Naive thymus-derived CD4-positive, alpha-beta T cell (primary cell): ENCODE measurements at regions of chr14 and their contacts with region 1.

Region 1: DNA sequence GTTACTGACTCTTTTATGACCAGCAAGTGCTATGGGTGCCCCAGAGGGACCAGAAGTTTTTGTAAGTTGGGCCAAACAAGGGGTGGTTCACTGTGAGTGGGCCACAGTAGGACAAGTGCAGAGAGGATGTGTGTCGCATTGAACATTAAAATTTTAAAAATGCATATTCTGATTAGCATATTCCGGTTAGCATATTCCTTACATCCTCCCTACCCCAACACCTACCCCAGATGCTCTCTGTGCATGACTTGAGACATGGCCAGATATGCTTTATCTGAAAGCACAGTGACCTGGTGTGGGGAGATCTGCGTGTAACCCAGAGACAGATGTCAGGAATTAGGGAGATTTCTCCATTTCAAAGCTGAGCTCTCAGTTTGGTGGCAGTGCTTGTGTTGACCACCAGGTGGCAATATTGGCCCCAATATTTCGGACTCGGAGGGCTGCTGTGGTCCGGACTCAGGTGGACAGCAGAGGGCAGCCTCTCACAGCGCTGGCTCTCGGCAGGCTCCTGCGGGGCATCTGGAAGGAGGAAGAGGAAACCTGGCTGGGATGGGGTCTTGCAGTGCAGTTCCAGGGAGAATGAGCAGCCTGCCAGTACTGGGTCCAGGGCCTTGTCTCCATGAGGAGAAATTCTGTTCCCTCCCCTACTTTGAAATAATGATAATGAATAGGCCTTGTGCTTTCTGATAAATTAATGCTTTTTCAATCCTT is 1.6 kb upstream of the CEBPE start:
- DNase-seq: peak; percentile 58 to 77 (median 74)
- ATAC-seq: peak; percentile 92
- H3K4me3 ChIP-seq: peak overlapping the region; percentile 53
- H3K4me3 Mint-ChIP-seq: peak overlapping the region; percentile 63 to 87 (median 72)
- H3K27ac ChIP-seq: peak overlapping the region; percentile 71
- H3K27ac Mint-ChIP-seq: peak overlapping the region; percentile 90 to 99 (median 96)
- H3K4me1 ChIP-seq: peaks cover 21 to 41% of the 10 kb centered on the region in 2 donors
- H3K4me1 Mint-ChIP-seq: peaks cover 26 to 65% (median 48%) of the 10 kb centered on the region in 7 donors
- H3K27me3 ChIP-seq: no peaks in the 10 kb centered on the region
- H3K27me3 Mint-ChIP-seq: peaks cover 0 to 5% (median 0%) of the 10 kb centered on the region in 5 donors

Region 2: DNA sequence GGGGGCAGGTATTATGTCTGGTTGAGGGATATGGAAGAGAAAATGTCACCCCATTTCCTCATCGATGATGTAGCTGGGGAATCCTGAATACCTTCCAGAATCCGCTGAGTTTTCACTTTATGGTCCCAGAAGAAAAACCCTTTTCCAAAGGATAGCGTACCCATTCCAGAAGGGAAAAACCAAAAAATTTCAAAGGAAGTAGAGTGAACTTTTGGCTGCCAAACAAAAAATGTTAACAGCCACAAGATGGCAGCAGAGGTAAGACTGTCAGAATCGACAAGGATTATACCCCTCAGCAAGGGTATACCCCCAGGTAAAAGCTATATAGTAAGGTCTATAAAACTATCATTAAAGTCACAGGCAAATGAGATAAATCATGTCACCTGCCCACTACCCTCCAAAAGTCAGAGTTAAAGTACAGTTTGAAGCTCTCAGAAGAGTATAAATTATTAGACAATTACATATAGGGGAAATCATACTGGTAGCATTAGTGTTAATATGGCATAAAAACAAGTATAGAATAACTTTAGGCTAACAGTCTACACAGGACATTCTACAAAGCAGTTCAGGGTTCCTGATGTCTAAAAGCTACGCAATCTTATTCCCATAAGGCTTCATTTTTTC is 43.8 kb before region 1 on chr14:
- CTCF ChIA-PET with region 1: interaction called, 22 read pairs
- POLR2A ChIA-PET with region 1: interaction called, 16 read pairs
- intact Hi-C with region 1: no loop called
- DNase-seq: peak in 5 of 9 donors; percentile 33 to 55 (median 49)
- ATAC-seq: peak; percentile 63
- H3K4me3 ChIP-seq: no peak overlapping the region
- H3K4me3 Mint-ChIP-seq: no peak overlapping the region
- H3K27ac ChIP-seq: peak overlapping the region; percentile 3
- H3K27ac Mint-ChIP-seq: peak overlapping the region in 2 of 9 donors; percentile 47 to 57
- H3K4me1 ChIP-seq: peaks cover 1 to 2% of the 10 kb centered on the region in 2 donors
- H3K4me1 Mint-ChIP-seq: peaks cover 8 to 28% (median 17%) of the 10 kb centered on the region in 7 donors
- H3K27me3 ChIP-seq: no peaks in the 10 kb centered on the region
- H3K27me3 Mint-ChIP-seq: no peaks in the 10 kb centered on the region

Region 3: DNA sequence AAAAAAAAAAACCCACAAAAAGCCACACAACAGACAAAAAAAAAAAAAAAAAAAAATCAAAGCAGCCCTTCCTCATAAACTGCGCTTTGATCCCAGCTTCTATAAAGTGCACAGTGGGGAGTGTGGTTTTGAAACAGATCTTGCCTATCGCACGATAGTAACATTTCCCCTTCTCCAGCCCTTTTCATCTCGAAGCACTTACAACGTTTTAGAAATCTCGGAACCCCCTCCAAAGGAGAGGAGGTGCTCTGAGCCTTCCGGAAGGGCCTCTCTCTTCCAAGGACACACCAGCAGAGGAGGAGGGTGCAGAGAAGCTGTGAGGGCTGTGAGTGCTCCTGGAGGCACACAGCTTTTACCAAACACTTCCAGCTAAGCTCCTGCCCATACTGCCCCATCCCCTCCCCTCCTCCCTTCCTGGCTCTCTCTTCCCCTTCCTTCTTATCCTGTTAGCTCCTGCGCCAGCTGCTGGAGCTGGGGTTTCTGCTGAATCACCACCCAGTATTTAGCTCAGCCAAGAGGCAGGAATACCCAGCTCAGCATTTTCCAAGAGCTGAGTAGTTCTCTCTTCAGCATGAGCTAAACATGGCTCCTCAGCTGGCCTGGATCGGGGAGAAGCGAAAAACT is 34.4 kb after region 1 on chr14:
- CTCF ChIA-PET with region 1: interaction called, 5 read pairs
- POLR2A ChIA-PET with region 1: interaction called, 4 read pairs
- intact Hi-C with region 1: loop called in 1 of 2 experiments (anchors 2 kb)
- DNase-seq: peak in 5 of 9 donors; percentile 8 to 20 (median 15)
- ATAC-seq: peak; percentile 47
- H3K4me3 ChIP-seq: no peak overlapping the region
- H3K4me3 Mint-ChIP-seq: peak overlapping the region; percentile 28 to 91 (median 75)
- H3K27ac ChIP-seq: no peak overlapping the region
- H3K27ac Mint-ChIP-seq: peak overlapping the region in 8 of 9 donors; percentile 48 to 88 (median 74)
- H3K4me1 ChIP-seq: peaks cover 0 to 27% of the 10 kb centered on the region in 2 donors
- H3K4me1 Mint-ChIP-seq: peaks cover 5 to 42% (median 33%) of the 10 kb centered on the region in 7 donors
- H3K27me3 ChIP-seq: no peaks in the 10 kb centered on the region
- H3K27me3 Mint-ChIP-seq: peaks cover 0 to 15% (median 0%) of the 10 kb centered on the region in 5 donors

Region 4: GRCh38 chr14:23174276-23175184 is 53.8 kb after region 1 on chr14:
- CTCF ChIA-PET with region 1: interaction called, 250 read pairs
- POLR2A ChIA-PET with region 1: interaction called, 8 read pairs
- intact Hi-C with region 1: no loop called
- DNase-seq: no peak
- ATAC-seq: no peak
- H3K4me3 ChIP-seq: no peak overlapping the region
- H3K4me3 Mint-ChIP-seq: peak overlapping the region in 1 of 10 donors; percentile 6
- H3K27ac ChIP-seq: no peak overlapping the region
- H3K27ac Mint-ChIP-seq: peak overlapping the region in 1 of 9 donors; percentile 9
- H3K4me1 ChIP-seq: peaks cover 0 to 12% of the 10 kb centered on the region in 2 donors
- H3K4me1 Mint-ChIP-seq: peaks cover 2 to 81% (median 39%) of the 10 kb centered on the region in 7 donors
- H3K27me3 ChIP-seq: no peaks in the 10 kb centered on the region
- H3K27me3 Mint-ChIP-seq: peaks cover 0 to 35% (median 6%) of the 10 kb centered on the region in 5 donors

Region 5: DNA sequence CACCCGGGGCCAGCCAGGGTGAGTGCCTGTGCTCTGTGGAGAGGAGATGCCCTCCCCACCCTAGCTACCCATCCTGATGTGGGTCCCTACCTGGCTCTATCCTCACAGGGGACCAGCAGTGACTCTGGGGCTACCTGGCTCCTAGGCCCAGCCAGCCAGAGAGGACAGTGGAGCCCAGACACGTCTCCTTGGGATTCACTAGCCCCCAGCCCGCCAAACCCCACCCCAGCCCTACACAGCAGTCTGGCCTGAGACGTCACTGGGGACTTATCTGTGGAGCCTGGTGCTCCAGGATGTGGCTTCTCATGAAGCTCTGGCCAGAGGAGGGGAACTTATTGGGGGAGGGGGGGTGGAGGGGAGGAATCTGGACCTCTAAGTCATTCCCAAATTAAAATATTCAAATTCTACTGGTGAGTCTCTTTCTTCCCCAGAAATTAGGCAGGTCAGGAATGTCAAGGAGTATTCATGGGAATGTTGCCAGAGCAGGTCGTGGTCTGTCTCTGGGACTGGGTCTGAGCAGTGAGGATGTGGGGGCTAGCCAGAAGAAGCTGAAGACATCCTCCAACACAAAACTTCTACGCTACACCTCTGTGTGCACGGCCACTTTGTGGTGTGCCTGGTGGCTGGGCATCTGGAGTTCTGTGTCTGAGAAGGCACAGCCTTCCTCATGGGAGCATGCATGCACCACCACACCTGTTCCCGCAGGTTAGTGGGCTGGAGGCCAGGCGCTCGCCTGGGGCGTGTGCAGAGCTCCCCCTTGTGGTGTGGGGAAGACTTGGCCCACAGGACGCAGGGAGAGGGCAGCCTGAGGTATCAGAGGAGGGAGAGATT is 258.9 kb after region 1 on chr14:
- CTCF ChIA-PET with region 1: interaction called, 12 read pairs
- POLR2A ChIA-PET with region 1: no interaction called
- intact Hi-C with region 1: loop called (anchors 1 kb)
- DNase-seq: peak; percentile 48 to 77 (median 68)
- ATAC-seq: peak; percentile 86
- H3K4me3 ChIP-seq: no peak overlapping the region
- H3K4me3 Mint-ChIP-seq: no peak overlapping the region
- H3K27ac ChIP-seq: no peak overlapping the region
- H3K27ac Mint-ChIP-seq: no peak overlapping the region
- H3K4me1 ChIP-seq: no peaks in the 10 kb centered on the region
- H3K4me1 Mint-ChIP-seq: peaks cover 0 to 3% (median 0%) of the 10 kb centered on the region in 7 donors
- H3K27me3 ChIP-seq: no peaks in the 10 kb centered on the region
- H3K27me3 Mint-ChIP-seq: peaks cover 0 to 16% (median 0%) of the 10 kb centered on the region in 5 donors